ENCODE measurements at regions of chr5 and their contacts with region 1.

Region 1: GRCh38 chr5:103041071-103041676 is 78.8 kb downstream of the GIN1 start:
- DNase-seq: no peak
- ATAC-seq: no peak

Region 2: GRCh38 chr5:102536323-102536928 is 504.7 kb before region 1 on chr5:
- intact Hi-C with region 1: loop called (anchors 5 kb)
- DNase-seq: no peak
- ATAC-seq: no peak

Region 3: GRCh38 chr5:104241046-104241445 is 1199.9 kb after region 1 on chr5:
- intact Hi-C with region 1: no loop called
- DNase-seq: no peak
- ATAC-seq: no peak